ENCODE measurements at regions of chr1 and their contacts with region 1.

Region 1: GRCh38 chr1:114178936-114179335 is 25.3 kb upstream of the SYT6 start:
- DNase-seq: no peak
- H3K4me3 ChIP-seq: no peak overlapping the region
- CTCF ChIP-seq: no peak
- POLR2A ChIP-seq: no peak

Region 2: GRCh38 chr1:112866151-112866550 is 1312.8 kb before region 1 on chr1:
- intact Hi-C with region 1: loop called (anchors 10 kb)
- DNase-seq: no peak
- H3K4me3 ChIP-seq: no peak overlapping the region
- CTCF ChIP-seq: no peak
- POLR2A ChIP-seq: no peak

Region 3: DNA sequence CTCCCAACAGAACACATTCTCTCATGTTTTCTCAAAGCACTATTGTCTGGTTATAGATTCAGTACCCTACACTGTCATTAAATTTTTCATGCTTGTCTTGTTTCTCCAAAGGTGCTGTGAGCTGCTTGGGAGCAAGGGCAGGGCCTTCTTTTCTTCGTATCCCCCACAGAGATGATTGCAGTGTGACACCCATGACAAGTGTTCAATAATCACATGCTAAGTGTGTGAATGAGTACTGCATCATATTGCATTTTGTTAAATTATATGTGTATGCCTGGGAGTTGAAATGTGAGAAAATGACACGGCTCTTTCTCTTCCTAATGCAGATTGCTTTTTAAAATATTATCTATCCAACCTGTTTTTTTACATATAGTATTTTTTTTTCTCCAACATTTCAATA is 845.9 kb before region 1 on chr1:
- intact Hi-C with region 1: no loop called
- DNase-seq: no peak
- H3K4me3 ChIP-seq: no peak overlapping the region
- CTCF ChIP-seq: no peak
- POLR2A ChIP-seq: no peak

Region 4: GRCh38 chr1:113940365-113941244 is 238.3 kb before region 1 on chr1:
- intact Hi-C with region 1: no loop called
- DNase-seq: no peak
- H3K4me3 ChIP-seq: no peak overlapping the region
- CTCF ChIP-seq: no peak
- POLR2A ChIP-seq: no peak

Region 5: DNA sequence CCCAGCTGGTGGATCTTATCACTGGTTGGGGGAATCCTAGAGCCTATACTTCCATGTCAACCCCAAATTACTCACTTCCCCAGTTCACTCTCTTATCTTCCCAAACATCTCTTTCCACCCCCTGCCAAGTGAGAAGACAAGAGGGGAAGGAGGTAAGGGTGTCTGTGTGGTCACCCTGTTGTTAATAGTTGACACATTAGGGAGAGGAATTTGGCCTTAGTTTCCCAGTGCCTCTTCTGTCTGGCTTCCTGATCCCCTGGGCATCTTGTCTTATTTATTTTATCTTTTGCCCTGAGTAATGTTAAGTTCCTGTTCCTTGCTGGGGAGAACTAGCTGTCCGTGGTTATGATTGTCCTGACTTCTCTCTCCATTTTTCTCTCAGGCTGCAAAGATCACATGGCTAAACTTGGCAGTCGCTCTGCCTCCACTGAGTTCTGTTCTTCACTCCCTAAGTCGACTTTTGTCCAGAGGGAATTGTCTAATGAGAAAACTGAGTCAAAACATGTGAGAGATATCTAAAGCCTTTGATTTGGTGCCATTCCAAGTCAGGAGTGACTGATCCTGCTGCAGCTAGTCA is 131.8 kb after region 1 on chr1:
- intact Hi-C with region 1: no loop called
- DNase-seq: no peak
- H3K4me3 ChIP-seq: no peak overlapping the region
- CTCF ChIP-seq: no peak
- POLR2A ChIP-seq: no peak

Measured in lower leg skin (tissue), 4 donors.